ENCODE measurements at regions of chr22 and their contacts with region 1.

Region 1: GRCh38 chr22:19766511-19767426 is 6.2 kb downstream of the TBX1 start:
- DNase-seq: peak; percentile 50
- ATAC-seq: peak; percentile 82
- H3K4me3 ChIP-seq: peak overlapping the region; percentile 72 to 87
- H3K27ac ChIP-seq: peak overlapping the region; percentile 94
- H3K4me1 ChIP-seq: peaks cover 12 to 23% of the 10 kb centered on the region in 2 experiments
- H3K27me3 ChIP-seq: no peaks in the 10 kb centered on the region
- CTCF ChIP-seq: peak; percentile 53 to 74 (median 70); a peak in 5 of 6 replicates
- POLR2A ChIP-seq: no peak
- RAD21 ChIP-seq: peak; percentile 61

Region 2: GRCh38 chr22:19463496-19464469 is 303.0 kb before region 1 on chr22:
- CTCF ChIA-PET with region 1: no interaction called
- POLR2A ChIA-PET with region 1: no interaction called
- RAD21 ChIA-PET with region 1: no interaction called
- intact Hi-C with region 1: no loop called
- DNase-seq: no peak
- ATAC-seq: no peak
- H3K4me3 ChIP-seq: no peak overlapping the region
- H3K27ac ChIP-seq: no peak overlapping the region
- H3K4me1 ChIP-seq: no peaks in the 10 kb centered on the region
- H3K27me3 ChIP-seq: no peaks in the 10 kb centered on the region
- CTCF ChIP-seq: no peak
- POLR2A ChIP-seq: no peak
- RAD21 ChIP-seq: no peak

Region 3: DNA sequence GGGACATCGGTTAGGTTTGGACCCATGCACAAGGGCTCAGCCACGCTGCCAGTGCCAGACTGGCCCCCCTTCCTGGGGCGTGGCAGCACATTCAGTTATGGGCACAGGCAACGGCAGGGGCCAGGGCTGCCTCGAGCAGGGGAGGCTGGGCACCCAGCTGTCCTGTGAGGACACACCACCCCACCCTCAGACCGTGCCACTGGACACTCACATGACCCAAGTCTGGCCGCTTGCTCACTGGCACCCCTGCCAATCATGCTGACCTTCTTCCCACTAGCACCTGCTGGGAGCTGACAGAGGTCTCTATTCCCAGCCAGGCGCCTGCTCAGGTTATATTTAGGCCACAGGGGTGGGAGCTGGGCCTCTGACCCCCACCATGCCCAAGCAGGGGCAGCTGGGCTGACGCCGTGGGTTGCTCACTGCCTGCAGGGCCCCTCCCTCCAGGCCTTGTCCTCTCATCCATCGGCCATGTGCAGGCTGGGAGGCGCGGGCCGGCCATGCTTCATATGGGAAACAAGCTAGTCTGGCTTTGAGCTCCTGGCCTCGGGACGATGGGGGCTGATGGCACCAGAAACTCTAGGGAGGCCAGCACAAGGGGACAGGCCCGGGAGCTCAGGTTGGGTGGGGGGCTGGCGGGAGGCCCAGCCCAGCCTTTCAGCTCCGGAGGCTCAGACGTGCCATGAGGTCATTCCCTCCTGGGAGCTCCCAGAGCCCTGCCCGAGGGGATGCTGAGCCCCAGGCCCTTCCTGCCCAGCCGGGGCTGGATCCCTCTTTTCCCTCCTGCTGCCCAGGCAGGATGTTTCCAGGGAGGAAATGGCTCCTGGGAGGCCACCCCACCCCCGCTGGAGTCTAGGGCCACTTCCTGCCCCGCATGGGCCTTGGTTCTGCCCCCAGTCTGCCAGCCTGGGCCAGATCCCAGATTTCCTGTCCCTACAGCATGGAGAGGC is 21.3 kb before region 1 on chr22:
- CTCF ChIA-PET with region 1: no interaction called
- POLR2A ChIA-PET with region 1: no interaction called
- RAD21 ChIA-PET with region 1: no interaction called
- intact Hi-C with region 1: no loop called
- DNase-seq: no peak
- ATAC-seq: no peak
- H3K4me3 ChIP-seq: no peak overlapping the region
- H3K27ac ChIP-seq: no peak overlapping the region
- H3K4me1 ChIP-seq: no peaks in the 10 kb centered on the region
- H3K27me3 ChIP-seq: no peaks in the 10 kb centered on the region
- CTCF ChIP-seq: no peak
- POLR2A ChIP-seq: no peak
- RAD21 ChIP-seq: no peak

Region 4: DNA sequence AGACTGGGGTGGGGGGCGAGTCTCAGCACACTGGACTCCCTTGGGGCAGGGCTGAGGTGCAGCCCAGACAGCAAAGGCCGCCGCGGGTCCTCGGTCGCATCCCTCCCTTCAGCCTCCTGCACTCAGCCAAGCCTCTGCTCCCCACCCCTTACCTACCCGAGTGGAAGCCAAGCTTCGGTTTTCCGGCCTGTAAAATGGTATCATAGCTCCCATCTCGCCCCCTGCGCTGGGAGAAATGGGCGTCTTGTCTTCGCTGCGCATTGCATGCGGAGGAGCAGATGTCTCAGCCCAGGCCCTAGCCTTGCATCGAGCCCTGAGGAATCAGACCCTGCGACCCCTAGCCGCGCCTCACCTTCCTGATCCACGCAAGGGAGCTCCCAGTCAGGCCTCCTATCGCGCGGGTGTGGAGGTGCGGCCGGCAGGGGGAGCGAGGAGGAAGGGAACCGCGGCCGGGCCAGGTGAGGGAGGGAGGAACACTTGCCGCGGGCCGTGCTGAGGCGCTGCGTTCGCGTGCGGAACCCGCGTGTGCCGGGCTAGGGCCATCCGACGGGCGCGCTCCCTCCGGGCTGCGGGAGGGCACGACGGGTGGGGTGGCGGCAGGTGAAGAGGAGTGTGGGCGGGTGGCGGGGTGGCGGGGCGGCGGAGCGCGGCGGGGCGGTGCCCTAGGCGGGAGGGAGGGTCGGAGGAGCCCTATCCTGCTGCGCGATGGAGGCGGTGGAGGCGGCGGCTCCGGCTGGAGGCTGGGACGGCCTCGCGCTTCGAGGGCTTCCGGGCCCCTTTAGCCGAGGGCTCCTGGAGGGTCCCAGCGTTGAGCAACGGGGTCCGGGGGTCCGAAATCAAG is 10.3 kb before region 1 on chr22:
- CTCF ChIA-PET with region 1: interaction called, 10 read pairs
- POLR2A ChIA-PET with region 1: interaction called, 4 read pairs
- RAD21 ChIA-PET with region 1: no interaction called
- intact Hi-C with region 1: no loop called
- DNase-seq: peak; percentile 34
- ATAC-seq: peak; percentile 88
- H3K4me3 ChIP-seq: peak overlapping the region; percentile 32 to 53
- H3K27ac ChIP-seq: peak overlapping the region; percentile 14; the same call in 1 of the 2 replicates
- H3K4me1 ChIP-seq: peaks cover 4 to 16% of the 10 kb centered on the region in 2 experiments; a peak in 3 of 4 replicates
- H3K27me3 ChIP-seq: no peaks in the 10 kb centered on the region
- CTCF ChIP-seq: peak; percentile 68 to 78 (median 74)
- POLR2A ChIP-seq: no peak
- RAD21 ChIP-seq: peak; percentile 83

Region 5: GRCh38 chr22:19854778-19855503 is 88.2 kb after region 1 on chr22 and contains the starts of genes GNB1L and RTL10:
- CTCF ChIA-PET with region 1: no interaction called
- POLR2A ChIA-PET with region 1: interaction called, 3 read pairs
- RAD21 ChIA-PET with region 1: no interaction called
- intact Hi-C with region 1: loop called (anchors 5 kb)
- DNase-seq: peak; percentile 85
- ATAC-seq: peak; percentile 82
- H3K4me3 ChIP-seq: peak within 1 kb of the TSS; percentile 97 to 99
- H3K27ac ChIP-seq: peak within 1 kb of the TSS; percentile 99
- H3K4me1 ChIP-seq: peaks cover 39 to 53% of the 10 kb centered on the region in 2 experiments
- H3K27me3 ChIP-seq: no peaks in the 10 kb centered on the region
- CTCF ChIP-seq: no peak
- POLR2A ChIP-seq: peak; percentile 95
- RAD21 ChIP-seq: no peak
- total RNA-seq, gene GNB1L: 12.1 TPM
- total RNA-seq, gene RTL10: 24.6 TPM

Measured in HCT116 (cell line).